ENCODE measurements at regions of chr12 and their contacts with region 1.

Region 1: DNA sequence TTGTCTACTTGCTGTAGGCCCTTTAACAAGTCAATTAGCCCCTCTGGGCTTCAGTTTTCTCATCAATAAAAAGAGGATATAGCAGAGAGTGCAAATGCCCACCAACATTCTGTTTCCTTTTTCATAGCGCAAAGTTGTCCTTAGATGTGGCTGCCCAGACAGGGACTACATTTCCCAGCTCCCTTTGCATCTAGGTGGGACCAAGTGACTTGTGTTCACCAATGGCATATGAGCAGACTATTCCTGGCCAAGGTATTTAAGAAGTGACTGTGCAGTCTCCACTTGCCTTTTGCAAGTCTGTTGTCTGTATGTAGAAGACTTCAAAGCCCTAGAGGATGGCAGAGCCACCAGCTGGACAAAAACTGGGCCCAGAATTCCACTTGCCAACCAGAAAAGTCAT is 59.7 kb downstream of the DAO start:
- DNase-seq: peak in 1 of 2 experiments; percentile 64
- H3K4me3 ChIP-seq: no peak overlapping the region
- H3K27ac ChIP-seq: no peak overlapping the region
- H3K4me1 ChIP-seq: no peaks in the 10 kb centered on the region
- H3K27me3 ChIP-seq: peaks cover 25% of the 10 kb centered on the region
- CTCF ChIP-seq: no peak

Region 2: GRCh38 chr12:107478881-107479280 is 1460.7 kb before region 1 on chr12:
- CTCF ChIA-PET with region 1: no interaction called
- POLR2A ChIA-PET with region 1: interaction called, 10 read pairs
- intact Hi-C with region 1: no loop called
- DNase-seq: no peak
- H3K4me3 ChIP-seq: no peak overlapping the region
- H3K27ac ChIP-seq: no peak overlapping the region
- H3K4me1 ChIP-seq: no peaks in the 10 kb centered on the region
- H3K27me3 ChIP-seq: no peaks in the 10 kb centered on the region
- CTCF ChIP-seq: no peak